ENCODE measurements at regions of chr11 and their contacts with region 1.

Region 1: GRCh38 chr11:61061081-61061826 is 41.0 kb upstream of the CD5 start:
- DNase-seq: peak; percentile 77
- H3K4me3 Mint-ChIP-seq: peak overlapping the region; percentile 71
- H3K27ac Mint-ChIP-seq: peak overlapping the region; percentile 93
- H3K4me1 Mint-ChIP-seq: peaks cover 80% of the 10 kb centered on the region
- H3K27me3 Mint-ChIP-seq: no peaks in the 10 kb centered on the region

Region 2: GRCh38 chr11:60978546-60979380 is 82.5 kb before region 1 on chr11:
- intact Hi-C with region 1: loop called (anchors 2 kb)
- DNase-seq: no peak
- H3K4me3 Mint-ChIP-seq: peak overlapping the region; percentile 85
- H3K27ac Mint-ChIP-seq: peak overlapping the region; percentile 89
- H3K4me1 Mint-ChIP-seq: peaks cover 72% of the 10 kb centered on the region
- H3K27me3 Mint-ChIP-seq: no peaks in the 10 kb centered on the region

Region 3: DNA sequence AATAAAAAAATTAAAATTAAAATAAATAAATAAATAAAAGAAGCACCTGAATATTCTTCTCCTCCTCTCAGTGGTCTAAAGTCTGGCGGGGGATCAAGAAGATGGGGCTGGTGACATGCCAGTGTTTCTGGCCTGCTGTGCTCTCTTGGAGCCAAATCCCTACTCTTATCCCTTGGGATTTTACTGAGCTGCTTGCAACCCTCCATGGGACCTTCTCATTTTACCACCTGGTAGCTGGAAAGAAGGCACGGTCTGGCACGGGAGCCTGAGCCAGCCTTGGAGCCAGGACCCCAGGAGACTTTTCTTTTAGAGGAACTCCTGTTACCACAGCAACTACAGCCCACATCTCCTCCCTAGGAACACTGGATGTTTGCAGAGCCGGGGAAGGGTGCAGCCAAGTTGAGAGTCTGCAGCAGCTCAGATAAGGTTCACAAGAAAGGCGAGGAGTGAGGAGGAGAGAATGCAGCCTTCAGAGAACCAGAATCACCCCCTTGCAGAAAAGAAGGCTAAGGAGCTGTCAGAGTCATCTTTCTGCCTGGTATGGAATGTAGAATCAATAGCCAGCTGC is 68.3 kb before region 1 on chr11:
- intact Hi-C with region 1: loop called (anchors 1 kb)
- DNase-seq: no peak
- H3K4me3 Mint-ChIP-seq: peak overlapping the region; percentile 68
- H3K27ac Mint-ChIP-seq: peak overlapping the region; percentile 92
- H3K4me1 Mint-ChIP-seq: peaks cover 65% of the 10 kb centered on the region
- H3K27me3 Mint-ChIP-seq: no peaks in the 10 kb centered on the region

Region 4: DNA sequence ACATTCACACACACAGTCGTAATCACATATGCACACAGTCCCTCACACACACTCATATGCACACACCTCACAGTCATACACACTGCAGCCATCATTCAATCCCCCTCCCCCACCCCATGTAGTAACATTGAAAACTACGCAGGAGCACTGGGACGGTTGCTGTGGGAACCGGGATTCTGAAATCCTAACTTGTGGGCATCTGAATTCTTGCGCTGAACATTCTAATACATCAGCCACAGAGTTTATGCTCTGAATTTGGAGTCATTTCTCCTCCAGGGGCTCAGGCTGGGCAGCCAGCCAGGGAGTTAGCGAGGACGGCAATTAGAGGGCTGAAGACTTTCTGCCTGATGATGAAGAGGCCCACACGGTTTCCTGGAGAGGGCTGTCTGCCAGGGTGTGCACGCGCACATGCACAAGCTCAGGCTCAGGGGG is 57.1 kb before region 1 on chr11:
- intact Hi-C with region 1: no loop called
- DNase-seq: no peak
- H3K4me3 Mint-ChIP-seq: peak overlapping the region; percentile 71
- H3K27ac Mint-ChIP-seq: peak overlapping the region; percentile 73
- H3K4me1 Mint-ChIP-seq: peaks cover 62% of the 10 kb centered on the region
- H3K27me3 Mint-ChIP-seq: no peaks in the 10 kb centered on the region

Region 5: DNA sequence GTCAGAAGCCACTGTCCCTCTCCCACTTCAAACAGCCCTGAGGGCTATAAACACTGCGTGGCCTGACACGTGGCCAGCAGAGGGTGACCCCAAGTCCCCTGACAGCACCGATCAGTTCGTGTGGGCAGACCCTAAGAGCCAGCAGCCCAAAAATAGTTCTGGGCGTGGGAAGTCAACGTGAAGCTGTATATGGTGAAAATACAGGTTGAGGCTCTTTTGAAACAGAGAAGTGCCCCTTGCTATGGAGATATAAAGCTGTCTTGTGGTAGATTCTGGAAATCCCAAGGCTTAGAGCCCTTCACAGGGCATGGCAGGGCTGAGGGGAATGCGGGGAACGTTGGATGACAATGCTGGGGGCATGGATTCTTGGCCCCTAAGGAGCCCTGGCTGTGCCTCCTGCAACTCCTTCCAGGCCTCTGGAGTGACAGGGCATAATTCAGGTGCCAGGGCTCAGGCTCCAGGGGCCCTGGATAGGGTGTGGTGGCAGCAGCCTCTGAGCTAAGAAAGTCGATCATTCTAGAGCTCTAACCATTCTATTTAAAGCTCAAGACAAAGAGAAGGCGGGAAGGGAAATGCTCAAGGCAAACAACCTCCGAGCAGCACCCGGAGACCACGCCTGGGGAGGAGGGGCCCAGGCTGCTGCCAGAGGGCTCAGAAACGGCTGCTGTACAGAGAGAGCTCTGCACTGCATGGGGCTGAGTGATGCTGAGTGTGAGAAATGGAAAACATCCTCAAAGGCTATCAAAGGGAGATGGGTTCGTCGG is 19.3 kb before region 1 on chr11:
- intact Hi-C with region 1: loop called (anchors 2 kb)
- DNase-seq: peak; percentile 90
- H3K4me3 Mint-ChIP-seq: peak overlapping the region; percentile 52
- H3K27ac Mint-ChIP-seq: peak overlapping the region; percentile 95
- H3K4me1 Mint-ChIP-seq: peaks cover 60% of the 10 kb centered on the region
- H3K27me3 Mint-ChIP-seq: no peaks in the 10 kb centered on the region

Region 6: DNA sequence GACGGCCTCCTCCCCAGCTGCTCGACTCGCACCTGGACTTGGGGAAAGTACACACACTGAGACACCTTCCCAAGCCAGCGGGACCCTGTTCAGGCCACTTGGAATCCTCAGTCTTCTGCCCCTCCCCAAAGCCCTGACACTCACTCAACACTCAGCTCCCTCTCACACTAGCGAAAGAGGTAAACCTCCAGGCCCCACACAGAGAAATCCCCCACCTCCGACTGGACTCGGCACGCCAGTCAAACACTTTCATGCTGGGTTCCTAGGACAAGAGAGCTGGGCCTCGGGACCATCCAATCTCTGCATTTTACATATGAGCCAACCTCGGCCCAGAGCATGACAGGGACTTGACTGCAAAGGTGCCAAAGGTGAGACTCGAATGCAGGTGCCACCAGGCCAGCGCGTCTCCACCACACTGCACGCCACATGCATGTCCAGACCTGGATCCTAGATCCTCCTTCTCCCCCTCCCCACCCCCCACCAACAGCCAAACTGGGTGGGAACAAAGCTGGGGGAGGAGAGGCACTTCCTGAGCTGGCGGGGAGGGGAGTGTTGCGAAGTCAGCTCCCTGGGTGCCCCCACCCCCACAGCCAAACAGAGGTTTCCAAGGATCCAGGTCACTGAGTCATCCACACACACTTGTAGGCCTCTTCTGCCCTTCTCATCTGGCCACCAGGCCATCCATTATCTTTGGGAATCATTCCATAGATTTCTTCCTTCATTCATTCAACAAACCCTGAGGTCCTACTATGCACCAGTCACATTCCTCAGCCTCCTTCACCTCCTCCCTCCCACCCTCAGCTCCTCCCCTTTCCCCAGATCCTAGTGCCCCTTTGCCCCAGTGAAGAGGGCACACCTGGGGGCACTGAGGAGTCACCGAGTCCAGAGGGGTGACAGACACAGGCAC is 30.4 kb after region 1 on chr11:
- intact Hi-C with region 1: loop called (anchors 1 kb)
- DNase-seq: no peak
- H3K4me3 Mint-ChIP-seq: peak overlapping the region; percentile 94
- H3K27ac Mint-ChIP-seq: peak overlapping the region; percentile 99
- H3K4me1 Mint-ChIP-seq: peaks cover 67% of the 10 kb centered on the region
- H3K27me3 Mint-ChIP-seq: no peaks in the 10 kb centered on the region

Region 7: GRCh38 chr11:61161190-61162091 is 100.2 kb after region 1 on chr11 and contains the start of gene VPS37C:
- intact Hi-C with region 1: loop called (anchors 2 kb)
- DNase-seq: peak; percentile 91
- H3K4me3 Mint-ChIP-seq: peak within 1 kb of the TSS; percentile 84
- H3K27ac Mint-ChIP-seq: peak within 1 kb of the TSS; percentile 85
- H3K4me1 Mint-ChIP-seq: peaks cover 52% of the 10 kb centered on the region
- H3K27me3 Mint-ChIP-seq: no peaks in the 10 kb centered on the region
- total RNA-seq, gene VPS37C: 10.6 and 12.5 TPM in 2 replicates

Measured in activated T-helper 2 cell treated with anti-CD3 and anti-CD28 coated beads, Interferon-gamma antibody, Interleukin-2, Interleukin-4, amounts not matched to agents 10 μg/mL and 5 μg/mL and 100 μg/mL, durations not matched to agents 14 hours and 24 hours and 36 hours (primary cell).